Psoas muscle (tissue), 8 donors: ENCODE measurements at regions of chr1 and their contacts with region 1.

Region 1: DNA sequence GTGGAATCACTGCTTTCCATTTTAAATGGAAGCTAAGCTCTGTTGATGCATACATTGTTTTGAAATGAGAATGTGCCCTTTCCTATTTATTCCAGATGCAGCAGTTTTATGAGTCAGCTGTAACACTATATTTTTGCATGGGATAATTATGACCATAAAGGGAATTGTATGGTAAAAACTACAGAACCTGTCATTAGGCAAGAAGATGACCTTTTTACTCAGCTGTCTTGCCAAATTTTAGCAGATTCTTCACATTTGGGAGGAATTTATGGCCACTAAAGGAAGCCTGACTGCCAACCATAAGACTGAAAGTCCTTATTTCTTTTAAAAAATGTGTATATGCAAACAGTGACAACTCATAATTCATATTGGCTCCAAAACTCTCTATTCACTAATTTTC is 356.3 kb upstream of the PRMT6 start:
- DNase-seq: no peak
- ATAC-seq: no peak
- H3K4me3 ChIP-seq: no peak overlapping the region
- H3K27ac ChIP-seq: no peak overlapping the region
- H3K4me1 ChIP-seq: no peaks in the 10 kb centered on the region
- H3K27me3 ChIP-seq: no peaks in the 10 kb centered on the region
- CTCF ChIP-seq: no peak

Region 2: GRCh38 chr1:106676021-106676420 is 24.2 kb before region 1 on chr1:
- intact Hi-C with region 1: loop called in 1 of 2 experiments (anchors 2 kb)
- DNase-seq: no peak
- ATAC-seq: no peak
- H3K4me3 ChIP-seq: no peak overlapping the region
- H3K27ac ChIP-seq: no peak overlapping the region
- H3K4me1 ChIP-seq: no peaks in the 10 kb centered on the region
- H3K27me3 ChIP-seq: no peaks in the 10 kb centered on the region
- CTCF ChIP-seq: no peak